ENCODE measurements at regions of chr11 and their contacts with region 1.

Region 1: GRCh38 chr11:130223291-130223971 is 63.8 kb downstream of the ST14 start:
- DNase-seq: no peak
- ATAC-seq: no peak
- H3K4me3 ChIP-seq: no peak overlapping the region
- H3K27ac ChIP-seq: no peak overlapping the region
- H3K4me1 ChIP-seq: peaks cover 23% of the 10 kb centered on the region
- H3K27me3 ChIP-seq: no peaks in the 10 kb centered on the region; a peak in 1 of 5 replicates
- CTCF ChIP-seq: no peak
- EP300 ChIP-seq: no peak
- POLR2A ChIP-seq: no peak
- RAD21 ChIP-seq: no peak

Region 2: GRCh38 chr11:129259931-129260348 is 963.5 kb before region 1 on chr11:
- CTCF ChIA-PET with region 1: no interaction called
- POLR2A ChIA-PET with region 1: no interaction called
- in situ Hi-C with region 1: no loop called
- intact Hi-C with region 1: loop called (anchors 5 kb)
- DNase-seq: peak; percentile 95
- ATAC-seq: peak; percentile 84
- H3K4me3 ChIP-seq: no peak overlapping the region
- H3K27ac ChIP-seq: peak overlapping the region; percentile 64
- H3K4me1 ChIP-seq: peaks cover 73% of the 10 kb centered on the region
- H3K27me3 ChIP-seq: no peaks in the 10 kb centered on the region
- CTCF ChIP-seq: no peak
- EP300 ChIP-seq: peak in 1 of 2 experiments; percentile 73; a peak in 2 of 4 replicates
- POLR2A ChIP-seq: no peak
- RAD21 ChIP-seq: no peak

Region 3: GRCh38 chr11:130243816-130244215 is 20.4 kb after region 1 on chr11:
- CTCF ChIA-PET with region 1: no interaction called
- POLR2A ChIA-PET with region 1: no interaction called
- in situ Hi-C with region 1: no loop called
- intact Hi-C with region 1: loop called (anchors 1 kb)
- DNase-seq: no peak
- ATAC-seq: no peak
- H3K4me3 ChIP-seq: no peak overlapping the region
- H3K27ac ChIP-seq: no peak overlapping the region
- H3K4me1 ChIP-seq: peaks cover 10% of the 10 kb centered on the region; the same call in 1 of the 2 replicates
- H3K27me3 ChIP-seq: no peaks in the 10 kb centered on the region
- CTCF ChIP-seq: no peak
- EP300 ChIP-seq: no peak
- POLR2A ChIP-seq: no peak
- RAD21 ChIP-seq: no peak

Region 4: GRCh38 chr11:130314750-130315285 is 91.4 kb after region 1 on chr11 and contains the start of gene ZBTB44:
- CTCF ChIA-PET with region 1: no interaction called
- POLR2A ChIA-PET with region 1: no interaction called
- in situ Hi-C with region 1: no loop called
- intact Hi-C with region 1: loop called (anchors 10 kb)
- DNase-seq: peak; percentile 76
- ATAC-seq: peak; percentile 88
- H3K4me3 ChIP-seq: peak within 1 kb of the TSS; percentile 75 to 90 (median 89)
- H3K27ac ChIP-seq: peak within 1 kb of the TSS; percentile 76
- H3K4me1 ChIP-seq: peaks cover 58% of the 10 kb centered on the region
- H3K27me3 ChIP-seq: no peaks in the 10 kb centered on the region
- CTCF ChIP-seq: no peak
- EP300 ChIP-seq: no peak
- POLR2A ChIP-seq: peak; percentile 38 to 62; a peak in 3 of 4 replicates
- RAD21 ChIP-seq: no peak
- total RNA-seq, gene ZBTB44: 19.5 and 23.6 TPM in 2 replicates